Aorta (tissue), 5 donors: ENCODE measurements at regions of chr15 and their contacts with region 1.

Region 1: DNA sequence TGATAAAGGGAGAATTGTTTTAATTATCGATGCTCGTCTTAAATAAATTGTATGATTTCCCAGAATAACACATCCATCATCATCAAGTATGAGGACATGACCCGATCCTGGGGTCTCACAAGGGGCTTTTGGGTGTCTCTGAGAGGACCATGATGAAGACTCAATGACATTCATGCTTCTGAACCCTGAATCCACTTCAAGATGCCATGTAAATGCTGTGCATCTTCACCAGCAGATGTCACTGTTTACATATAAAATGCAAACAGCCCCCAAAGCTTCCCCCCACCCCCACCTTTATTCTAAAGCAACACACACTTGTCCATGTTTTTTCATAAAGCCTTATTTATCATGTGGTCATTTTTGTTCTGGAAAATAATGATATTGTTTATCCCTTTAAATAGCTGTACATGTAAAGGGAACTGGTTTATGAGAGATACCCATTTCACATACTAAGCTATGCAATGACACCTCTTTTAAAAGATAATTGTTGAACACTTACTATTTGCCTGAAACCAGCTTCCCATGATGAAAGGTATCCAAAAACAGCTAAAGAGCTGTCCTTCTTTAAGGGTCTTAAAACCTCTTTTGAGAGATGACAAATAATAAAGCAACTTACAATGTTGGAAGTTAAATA is 69.7 kb upstream of the UBE3A start:
- DNase-seq: no peak
- ATAC-seq: no peak
- H3K4me3 ChIP-seq: no peak overlapping the region
- H3K27ac ChIP-seq: no peak overlapping the region
- H3K4me1 ChIP-seq: peaks cover 0 to 4% of the 10 kb centered on the region in 2 donors
- H3K27me3 ChIP-seq: no peaks in the 10 kb centered on the region

Region 2: GRCh38 chr15:24761704-24762302 is 746.7 kb before region 1 on chr15:
- intact Hi-C with region 1: loop called (anchors 10 kb)
- DNase-seq: no peak
- ATAC-seq: no peak
- H3K4me3 ChIP-seq: no peak overlapping the region
- H3K27ac ChIP-seq: no peak overlapping the region
- H3K4me1 ChIP-seq: no peaks in the 10 kb centered on the region
- H3K27me3 ChIP-seq: no peaks in the 10 kb centered on the region

Region 3: DNA sequence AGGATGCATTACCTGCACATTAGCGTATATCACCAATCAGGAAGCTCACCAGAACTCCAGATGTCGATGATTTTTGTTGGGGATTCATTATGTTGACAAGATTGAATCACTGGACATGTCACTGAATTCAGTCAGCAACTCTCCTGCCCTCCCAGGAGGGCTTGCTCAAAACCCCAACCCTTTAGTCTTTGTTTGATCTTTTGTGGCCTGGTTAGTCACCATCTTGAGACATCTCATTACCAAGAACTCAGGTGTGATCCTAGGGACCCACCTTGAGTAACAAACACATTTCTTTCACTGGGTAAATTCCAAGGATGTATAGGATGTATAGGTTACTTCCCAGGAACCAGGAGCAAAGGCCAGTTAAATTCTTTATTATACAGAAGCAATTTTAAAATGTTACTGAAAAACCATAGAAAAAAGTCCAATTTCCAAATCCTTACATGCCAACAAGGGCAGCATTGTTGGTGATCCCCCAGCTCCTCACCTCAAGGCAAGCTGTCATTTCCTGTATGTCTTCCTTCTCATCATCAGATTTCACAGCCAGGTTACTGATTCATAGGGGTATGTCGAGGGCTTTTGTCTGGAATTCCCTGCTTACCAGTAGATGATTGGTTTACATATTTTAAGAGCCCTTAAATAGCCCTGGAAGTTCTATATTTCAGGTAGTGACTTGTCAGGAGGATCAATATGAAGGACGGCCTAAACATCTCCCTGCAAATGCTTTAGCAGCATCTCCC is 542.0 kb before region 1 on chr15:
- intact Hi-C with region 1: no loop called
- DNase-seq: no peak
- ATAC-seq: no peak
- H3K4me3 ChIP-seq: no peak overlapping the region
- H3K27ac ChIP-seq: no peak overlapping the region
- H3K4me1 ChIP-seq: peaks cover 0 to 2% of the 10 kb centered on the region in 2 donors
- H3K27me3 ChIP-seq: no peaks in the 10 kb centered on the region

Region 4: GRCh38 chr15:25563571-25563970 is 55.1 kb after region 1 on chr15:
- intact Hi-C with region 1: loop called in 1 of 2 experiments (anchors 5 kb)
- DNase-seq: no peak
- ATAC-seq: no peak
- H3K4me3 ChIP-seq: no peak overlapping the region
- H3K27ac ChIP-seq: peak overlapping the region in 1 of 2 donors; percentile 50
- H3K4me1 ChIP-seq: peaks cover 9 to 10% of the 10 kb centered on the region in 2 donors
- H3K27me3 ChIP-seq: no peaks in the 10 kb centered on the region

Region 5: GRCh38 chr15:25863111-25863967 is 354.9 kb after region 1 on chr15 and contains the start of gene ATP10A:
- intact Hi-C with region 1: loop called in 1 of 2 experiments (anchors 10 kb)
- DNase-seq: peak; percentile 68 to 88
- ATAC-seq: peak; percentile 24
- H3K4me3 ChIP-seq: peak within 1 kb of the TSS; percentile 64 to 96
- H3K27ac ChIP-seq: peak within 1 kb of the TSS; percentile 77 to 82
- H3K4me1 ChIP-seq: no peaks in the 10 kb centered on the region
- H3K27me3 ChIP-seq: no peaks in the 10 kb centered on the region
- total RNA-seq, gene ATP10A: 19.9 to 55.0 TPM

Region 6: GRCh38 chr15:26028086-26028740 is 519.7 kb after region 1 on chr15:
- intact Hi-C with region 1: loop called in 1 of 2 experiments (anchors 5 kb)
- DNase-seq: no peak
- ATAC-seq: no peak
- H3K4me3 ChIP-seq: no peak overlapping the region
- H3K27ac ChIP-seq: no peak overlapping the region
- H3K4me1 ChIP-seq: no peaks in the 10 kb centered on the region
- H3K27me3 ChIP-seq: no peaks in the 10 kb centered on the region

Region 7: DNA sequence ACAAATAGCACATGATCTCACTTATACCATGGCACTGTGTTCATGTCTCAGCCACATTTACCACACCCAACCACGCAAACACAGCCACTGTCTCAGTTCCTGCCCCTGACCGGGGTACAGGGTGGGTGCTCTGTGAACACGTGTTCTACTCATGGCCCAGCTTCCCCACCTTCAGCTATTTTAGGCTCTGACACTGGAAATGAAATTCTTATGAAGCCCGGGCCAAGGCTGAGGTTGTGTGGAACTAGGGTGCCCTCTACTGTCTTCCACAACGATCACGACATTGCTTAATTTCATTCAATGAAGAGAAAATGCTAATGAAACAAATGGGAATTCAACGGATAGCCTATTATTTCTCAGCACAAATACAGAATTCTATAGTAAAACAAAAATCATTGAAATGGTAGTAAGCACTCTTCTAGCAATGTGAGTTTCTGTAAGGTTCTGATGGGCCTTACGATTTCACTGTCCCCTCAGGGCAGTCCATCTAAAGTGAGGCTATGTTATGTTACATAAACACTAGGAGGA is 1356.2 kb after region 1 on chr15:
- intact Hi-C with region 1: loop called in 1 of 2 experiments (anchors 10 kb)
- DNase-seq: no peak
- ATAC-seq: no peak
- H3K4me3 ChIP-seq: no peak overlapping the region
- H3K27ac ChIP-seq: no peak overlapping the region
- H3K4me1 ChIP-seq: no peaks in the 10 kb centered on the region
- H3K27me3 ChIP-seq: no peaks in the 10 kb centered on the region